B cell (primary cell): ENCODE measurements at regions of chr9 and their contacts with region 1.

Region 1: GRCh38 chr9:127224178-127224882 is 40.2 kb upstream of the GARNL3 start:
- DNase-seq: peak; percentile 94
- ATAC-seq: peak; percentile 73
- H3K4me3 ChIP-seq: peak overlapping the region in 4 of 5 experiments; percentile 39 to 75 (median 52)
- H3K4me3 Mint-ChIP-seq: peak overlapping the region; percentile 93
- H3K27ac ChIP-seq: peak overlapping the region in 1 of 2 donors; percentile 39
- H3K27ac Mint-ChIP-seq: peak overlapping the region; percentile 95
- H3K4me1 ChIP-seq: peaks cover 21 to 33% of the 10 kb centered on the region in 2 donors
- H3K4me1 Mint-ChIP-seq: peaks cover 43% of the 10 kb centered on the region
- H3K27me3 ChIP-seq: peaks cover 0 to 9% (median 3%) of the 10 kb centered on the region in 4 experiments
- H3K27me3 Mint-ChIP-seq: peaks cover 4% of the 10 kb centered on the region
- CTCF ChIP-seq: no peak

Region 2: GRCh38 chr9:127423934-127424675 is 199.8 kb after region 1 on chr9 and contains the start of gene ZNF79:
- CTCF ChIA-PET with region 1: no interaction called
- POLR2A ChIA-PET with region 1: interaction called, 4 read pairs
- intact Hi-C with region 1: loop called (anchors 1 kb)
- DNase-seq: peak; percentile 93
- ATAC-seq: peak; percentile 94
- H3K4me3 ChIP-seq: peak within 1 kb of the TSS; percentile 73 to 97 (median 86)
- H3K4me3 Mint-ChIP-seq: peak within 1 kb of the TSS; percentile 99
- H3K27ac ChIP-seq: peak within 1 kb of the TSS; percentile 56 to 79
- H3K27ac Mint-ChIP-seq: peak within 1 kb of the TSS; percentile 95
- H3K4me1 ChIP-seq: peaks cover 19 to 25% of the 10 kb centered on the region in 2 donors
- H3K4me1 Mint-ChIP-seq: peaks cover 36% of the 10 kb centered on the region
- H3K27me3 ChIP-seq: no peaks in the 10 kb centered on the region
- H3K27me3 Mint-ChIP-seq: no peaks in the 10 kb centered on the region
- CTCF ChIP-seq: peak; percentile 9
- total RNA-seq, gene ZNF79: 16.1 and 17.7 TPM in 2 replicates